CD8-positive, alpha-beta memory T cell (primary cell): ENCODE measurements at regions of chr19 and their contacts with region 1.

Region 1: GRCh38 chr19:23273590-23274413 is 23.6 kb upstream of the ZNF724 start:
- DNase-seq: peak; percentile 84 to 94 (median 89)
- H3K4me3 ChIP-seq: peak overlapping the region; percentile 88
- H3K4me3 Mint-ChIP-seq: peak overlapping the region; percentile 94 to 99 (median 98)
- H3K27ac ChIP-seq: peak overlapping the region; percentile 83
- H3K27ac Mint-ChIP-seq: peak overlapping the region; percentile 91 to 99 (median 95)
- H3K4me1 ChIP-seq: no peaks in the 10 kb centered on the region
- H3K4me1 Mint-ChIP-seq: peaks cover 25 to 51% (median 28%) of the 10 kb centered on the region in 3 donors
- H3K27me3 ChIP-seq: no peaks in the 10 kb centered on the region
- H3K27me3 Mint-ChIP-seq: no peaks in the 10 kb centered on the region

Region 2: GRCh38 chr19:23249911-23250649 is 23.7 kb before region 1 on chr19 and contains the start of gene ZNF724:
- CTCF ChIA-PET with region 1: interaction called, 11 read pairs
- POLR2A ChIA-PET with region 1: interaction called, 23 read pairs
- DNase-seq: peak; percentile 77 to 92 (median 86)
- H3K4me3 ChIP-seq: peak within 1 kb of the TSS; percentile 96
- H3K4me3 Mint-ChIP-seq: peak within 1 kb of the TSS; percentile 95 to 98 (median 97)
- H3K27ac ChIP-seq: peak within 1 kb of the TSS; percentile 43
- H3K27ac Mint-ChIP-seq: peak within 1 kb of the TSS; percentile 68 to 98 (median 90)
- H3K4me1 ChIP-seq: peaks cover 8% of the 10 kb centered on the region
- H3K4me1 Mint-ChIP-seq: peaks cover 10 to 21% (median 19%) of the 10 kb centered on the region in 3 donors
- H3K27me3 ChIP-seq: no peaks in the 10 kb centered on the region
- H3K27me3 Mint-ChIP-seq: no peaks in the 10 kb centered on the region
- total RNA-seq, gene ZNF724: 10.7 to 11.3 TPM

Region 3: GRCh38 chr19:23321948-23322549 is 48.2 kb after region 1 on chr19:
- CTCF ChIA-PET with region 1: no interaction called
- POLR2A ChIA-PET with region 1: no interaction called
- DNase-seq: no peak
- H3K4me3 ChIP-seq: no peak overlapping the region
- H3K4me3 Mint-ChIP-seq: no peak overlapping the region
- H3K27ac ChIP-seq: no peak overlapping the region
- H3K27ac Mint-ChIP-seq: no peak overlapping the region
- H3K4me1 ChIP-seq: no peaks in the 10 kb centered on the region
- H3K4me1 Mint-ChIP-seq: no peaks in the 10 kb centered on the region
- H3K27me3 ChIP-seq: no peaks in the 10 kb centered on the region
- H3K27me3 Mint-ChIP-seq: peaks cover 0 to 1% of the 10 kb centered on the region in 2 donors

Region 4: DNA sequence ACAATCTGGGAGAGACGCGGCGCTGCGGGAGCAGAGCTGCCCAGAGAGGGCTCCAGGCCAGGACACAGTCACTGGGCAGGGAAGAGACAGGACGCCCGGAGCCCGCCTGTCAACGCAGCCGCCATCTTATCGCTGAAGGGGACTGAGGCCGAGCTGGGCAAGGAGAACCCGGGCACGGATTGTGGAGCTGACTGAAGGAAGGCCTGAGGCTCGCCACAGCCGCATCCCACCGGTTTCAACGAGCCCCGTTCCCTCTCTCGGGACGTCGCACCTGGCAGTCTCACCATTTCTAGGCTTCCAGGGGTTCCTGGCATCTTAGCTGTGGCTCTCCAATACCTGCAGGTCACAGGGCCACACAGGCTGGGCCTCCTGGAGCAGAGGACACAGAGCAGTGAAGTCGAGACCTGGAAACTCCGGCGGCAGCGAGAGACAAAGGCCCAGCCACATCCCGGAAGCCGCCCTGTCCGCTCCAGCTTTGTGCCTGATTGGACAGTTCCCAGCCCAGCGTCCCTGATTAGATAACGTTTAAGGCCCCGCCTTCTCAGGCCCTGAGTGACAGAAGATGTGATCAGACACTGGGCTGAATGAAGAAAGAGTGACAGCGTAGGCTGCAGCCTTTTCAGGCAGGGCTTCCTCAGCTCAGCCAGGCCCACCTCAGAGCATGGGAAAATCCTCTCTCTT is 121.4 kb after region 1 on chr19 and contains the start of gene ZNF91:
- CTCF ChIA-PET with region 1: interaction called, 7 read pairs
- POLR2A ChIA-PET with region 1: interaction called, 25 read pairs
- DNase-seq: peak; percentile 88 to 95 (median 92)
- H3K4me3 ChIP-seq: peak within 1 kb of the TSS; percentile 92
- H3K4me3 Mint-ChIP-seq: peak within 1 kb of the TSS; percentile 98 to 100 (median 99)
- H3K27ac ChIP-seq: peak within 1 kb of the TSS; percentile 94
- H3K27ac Mint-ChIP-seq: peak within 1 kb of the TSS; percentile 97 to 100 (median 98)
- H3K4me1 ChIP-seq: peaks cover 24% of the 10 kb centered on the region
- H3K4me1 Mint-ChIP-seq: peaks cover 37 to 43% (median 37%) of the 10 kb centered on the region in 3 donors
- H3K27me3 ChIP-seq: no peaks in the 10 kb centered on the region
- H3K27me3 Mint-ChIP-seq: peaks cover 0 to 2% of the 10 kb centered on the region in 2 donors
- total RNA-seq, gene ZNF91: 27.6 to 31.3 TPM

Region 5: GRCh38 chr19:23758187-23759074 is 484.6 kb after region 1 on chr19 and contains the start of gene ZNF681:
- CTCF ChIA-PET with region 1: no interaction called
- POLR2A ChIA-PET with region 1: interaction called, 13 read pairs
- DNase-seq: peak; percentile 74 to 94 (median 87)
- H3K4me3 ChIP-seq: peak within 1 kb of the TSS; percentile 90
- H3K4me3 Mint-ChIP-seq: peak within 1 kb of the TSS; percentile 93 to 96 (median 95)
- H3K27ac ChIP-seq: peak within 1 kb of the TSS; percentile 88
- H3K27ac Mint-ChIP-seq: peak within 1 kb of the TSS; percentile 94 to 99 (median 98)
- H3K4me1 ChIP-seq: peaks cover 14% of the 10 kb centered on the region
- H3K4me1 Mint-ChIP-seq: peaks cover 34 to 49% (median 48%) of the 10 kb centered on the region in 3 donors
- H3K27me3 ChIP-seq: no peaks in the 10 kb centered on the region
- H3K27me3 Mint-ChIP-seq: no peaks in the 10 kb centered on the region
- total RNA-seq, gene ZNF681: 4.6 to 4.9 TPM